Dorsolateral prefrontal cortex (tissue), 120 donors: ENCODE measurements at regions of chr5 and their contacts with region 1.

Region 1: GRCh38 chr5:17343675-17344074 is 126.2 kb downstream of the BASP1 start:
- DNase-seq: no peak
- H3K4me3 ChIP-seq: no peak overlapping the region
- H3K27ac ChIP-seq: no peak overlapping the region
- H3K27me3 ChIP-seq: no peaks in the 10 kb centered on the region
- CTCF ChIP-seq: no peak

Region 2: GRCh38 chr5:17357504-17357903 is 13.8 kb after region 1 on chr5:
- intact Hi-C with region 1: loop called in 1 of 2 experiments (anchors 1 kb)
- DNase-seq: no peak
- H3K4me3 ChIP-seq: no peak overlapping the region
- H3K27ac ChIP-seq: no peak overlapping the region
- H3K27me3 ChIP-seq: no peaks in the 10 kb centered on the region
- CTCF ChIP-seq: no peak

Region 3: GRCh38 chr5:18159331-18159730 is 815.7 kb after region 1 on chr5:
- intact Hi-C with region 1: no loop called
- DNase-seq: no peak
- H3K4me3 ChIP-seq: no peak overlapping the region
- H3K27ac ChIP-seq: no peak overlapping the region
- H3K27me3 ChIP-seq: no peaks in the 10 kb centered on the region
- CTCF ChIP-seq: no peak